ENCODE measurements at regions of chr9 and their contacts with region 1.

Region 1: GRCh38 chr9:92140074-92140753 is 25.0 kb upstream of the SPTLC1 start:
- DNase-seq: peak; percentile 24
- H3K4me3 ChIP-seq: peak overlapping the region in 3 of 4 donors; percentile 43 to 67 (median 49)
- H3K27ac ChIP-seq: peak overlapping the region in 1 of 4 donors; percentile 59
- H3K4me1 ChIP-seq: peaks cover 7 to 25% (median 9%) of the 10 kb centered on the region in 3 donors
- H3K27me3 ChIP-seq: peaks cover 0 to 28% (median 0%) of the 10 kb centered on the region in 4 donors
- CTCF ChIP-seq: peak; percentile 86 to 93 (median 90)
- POLR2A ChIP-seq: no peak

Region 2: DNA sequence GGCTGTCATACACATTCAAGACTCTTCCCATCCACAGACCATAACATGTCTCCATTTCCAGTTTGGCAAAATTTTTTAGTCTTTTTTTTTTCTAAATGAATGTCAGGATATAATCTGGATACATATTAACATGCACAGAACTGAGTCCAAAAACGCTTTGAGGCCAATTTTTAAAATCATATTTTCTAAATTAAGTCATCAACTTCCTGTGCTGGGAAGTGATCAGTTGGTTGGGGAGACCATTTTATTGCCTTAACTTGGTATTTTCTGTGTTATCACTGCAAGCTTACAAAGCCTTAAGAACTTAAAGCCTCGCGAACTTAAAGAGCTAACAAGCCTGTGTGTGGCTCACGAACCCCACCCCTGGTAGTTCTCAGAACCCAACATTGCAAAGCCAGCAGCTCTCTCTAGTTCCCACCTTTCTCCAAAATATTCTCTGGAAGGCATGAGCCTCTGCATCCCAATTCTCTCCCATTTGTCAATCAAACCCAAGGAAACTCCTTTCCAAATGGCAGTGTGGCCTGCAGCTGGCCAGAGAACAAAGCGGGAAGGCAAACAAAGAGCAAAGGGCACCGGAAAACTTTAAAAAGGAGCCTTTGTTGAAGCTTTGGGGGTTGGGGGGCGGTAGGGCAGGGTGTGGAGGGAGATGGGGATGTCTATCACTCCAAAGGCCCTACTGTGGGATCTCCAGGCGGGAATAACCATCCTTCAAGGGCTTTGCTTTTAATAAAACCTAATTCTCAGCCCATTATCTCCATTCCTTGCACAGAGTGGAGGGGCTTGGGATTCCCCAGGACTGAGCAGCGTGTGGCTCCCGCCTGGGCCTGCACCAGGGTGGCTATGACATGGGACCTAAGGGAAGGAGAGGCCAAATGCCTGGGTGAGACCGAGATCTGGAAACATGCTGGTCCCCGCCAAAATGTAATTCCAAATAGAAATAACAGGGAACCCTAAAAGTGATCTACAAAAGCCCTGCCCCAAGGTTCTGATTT is 255.2 kb before region 1 on chr9:
- intact Hi-C with region 1: no loop called
- DNase-seq: no peak
- H3K4me3 ChIP-seq: no peak overlapping the region
- H3K27ac ChIP-seq: peak overlapping the region in 3 of 4 donors; percentile 43 to 70 (median 52)
- H3K4me1 ChIP-seq: peaks cover 0 to 17% (median 0%) of the 10 kb centered on the region in 3 donors
- H3K27me3 ChIP-seq: peaks cover 0 to 29% (median 0%) of the 10 kb centered on the region in 4 donors
- CTCF ChIP-seq: no peak
- POLR2A ChIP-seq: no peak

Region 3: DNA sequence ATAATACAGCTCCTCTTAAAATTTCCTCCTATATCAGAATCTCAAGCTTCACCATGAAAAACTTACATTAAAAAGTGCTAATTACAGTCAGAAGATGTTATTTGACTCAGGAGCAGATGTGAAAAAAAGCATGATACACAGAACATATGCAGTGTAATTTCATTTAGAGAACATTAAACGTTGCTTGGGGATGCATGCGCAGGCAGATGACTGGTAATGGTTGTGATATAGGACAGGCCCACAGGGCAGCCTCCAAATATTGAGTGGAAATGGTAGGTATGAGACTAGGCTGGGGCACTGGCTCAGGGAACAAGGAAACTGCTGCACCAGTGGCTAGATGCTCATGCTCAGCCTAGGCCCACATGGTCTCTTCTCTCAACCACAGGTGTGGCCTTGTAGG is 83.5 kb after region 1 on chr9:
- intact Hi-C with region 1: no loop called
- DNase-seq: no peak
- H3K4me3 ChIP-seq: no peak overlapping the region
- H3K27ac ChIP-seq: no peak overlapping the region
- H3K4me1 ChIP-seq: no peaks in the 10 kb centered on the region
- H3K27me3 ChIP-seq: no peaks in the 10 kb centered on the region
- CTCF ChIP-seq: no peak
- POLR2A ChIP-seq: no peak

Region 4: DNA sequence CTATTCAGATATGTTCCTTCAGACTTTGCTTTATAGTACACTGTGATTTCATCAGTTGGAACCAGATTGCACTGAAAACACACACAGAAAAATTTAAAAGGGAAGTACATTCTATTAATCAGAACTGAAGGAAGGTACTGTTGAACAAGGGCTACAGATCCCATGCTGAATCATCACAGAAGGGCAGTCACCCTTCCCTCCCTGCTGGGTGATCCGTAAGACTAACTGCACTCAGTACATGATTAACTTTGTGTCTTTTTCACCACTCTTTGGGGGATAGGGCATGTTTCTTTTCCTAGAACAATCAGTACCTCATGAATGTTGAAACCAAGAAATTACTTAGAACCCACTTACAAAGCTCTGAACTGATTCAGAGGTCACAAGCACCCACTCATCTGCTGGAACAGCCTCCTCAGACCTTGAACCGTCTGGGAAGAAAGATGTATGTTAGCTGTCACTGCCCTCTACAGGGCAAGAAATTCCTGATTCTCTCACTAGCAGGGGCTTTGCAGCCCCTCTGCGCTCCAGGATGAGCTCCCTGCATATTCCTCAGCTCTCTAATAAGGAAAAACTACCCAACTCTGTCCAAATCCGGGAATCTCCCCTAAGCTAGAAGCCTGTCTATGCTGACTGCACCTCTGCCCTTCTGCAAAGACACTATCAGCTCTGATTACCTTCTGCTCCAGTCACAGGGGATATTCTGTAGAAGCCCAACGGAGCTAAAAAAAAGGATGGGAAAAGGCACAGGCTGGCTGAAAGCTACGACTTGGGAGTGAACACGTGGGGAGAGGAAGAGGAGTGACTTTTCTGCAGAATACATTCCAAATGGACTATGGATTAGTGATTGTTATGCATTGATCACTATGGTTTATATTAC is 102.3 kb after region 1 on chr9:
- intact Hi-C with region 1: loop called (anchors 5 kb)
- DNase-seq: no peak
- H3K4me3 ChIP-seq: no peak overlapping the region
- H3K27ac ChIP-seq: peak overlapping the region in 1 of 4 donors; percentile 4
- H3K4me1 ChIP-seq: no peaks in the 10 kb centered on the region
- H3K27me3 ChIP-seq: no peaks in the 10 kb centered on the region
- CTCF ChIP-seq: peak in 3 of 6 experiments; percentile 8 to 38 (median 16)
- POLR2A ChIP-seq: no peak

Measured in esophagus squamous epithelium (tissue), 5 donors.